B cell (primary cell): ENCODE measurements at regions of chr10 and their contacts with region 1.

Region 1: GRCh38 chr10:63376560-63377304 is 89.0 kb downstream of the JMJD1C start:
- DNase-seq: peak; percentile 64
- ATAC-seq: peak; percentile 94
- H3K4me3 ChIP-seq: peak overlapping the region in 3 of 5 experiments; percentile 7 to 45 (median 40)
- H3K4me3 Mint-ChIP-seq: peak overlapping the region; percentile 59
- H3K27ac ChIP-seq: no peak overlapping the region
- H3K27ac Mint-ChIP-seq: peak overlapping the region; percentile 3
- H3K4me1 ChIP-seq: peaks cover 8 to 11% of the 10 kb centered on the region in 2 donors
- H3K4me1 Mint-ChIP-seq: peaks cover 17% of the 10 kb centered on the region
- H3K27me3 ChIP-seq: no peaks in the 10 kb centered on the region
- H3K27me3 Mint-ChIP-seq: no peaks in the 10 kb centered on the region
- CTCF ChIP-seq: no peak

Region 2: GRCh38 chr10:63173468-63174232 is 203.1 kb before region 1 on chr10:
- CTCF ChIA-PET with region 1: no interaction called
- POLR2A ChIA-PET with region 1: no interaction called
- intact Hi-C with region 1: no loop called
- DNase-seq: peak; percentile 70
- ATAC-seq: peak; percentile 91
- H3K4me3 ChIP-seq: no peak overlapping the region
- H3K4me3 Mint-ChIP-seq: peak overlapping the region; percentile 4
- H3K27ac ChIP-seq: peak overlapping the region; percentile 21 to 51
- H3K27ac Mint-ChIP-seq: peak overlapping the region; percentile 59
- H3K4me1 ChIP-seq: peaks cover 18 to 22% of the 10 kb centered on the region in 2 donors
- H3K4me1 Mint-ChIP-seq: peaks cover 31% of the 10 kb centered on the region
- H3K27me3 ChIP-seq: no peaks in the 10 kb centered on the region
- H3K27me3 Mint-ChIP-seq: no peaks in the 10 kb centered on the region
- CTCF ChIP-seq: no peak

Region 3: GRCh38 chr10:63409465-63410027 is 32.8 kb after region 1 on chr10:
- CTCF ChIA-PET with region 1: no interaction called
- POLR2A ChIA-PET with region 1: no interaction called
- intact Hi-C with region 1: loop called (anchors 5 kb)
- DNase-seq: no peak
- ATAC-seq: no peak
- H3K4me3 ChIP-seq: no peak overlapping the region
- H3K4me3 Mint-ChIP-seq: no peak overlapping the region
- H3K27ac ChIP-seq: no peak overlapping the region
- H3K27ac Mint-ChIP-seq: no peak overlapping the region
- H3K4me1 ChIP-seq: peaks cover 6 to 10% of the 10 kb centered on the region in 2 donors
- H3K4me1 Mint-ChIP-seq: peaks cover 18% of the 10 kb centered on the region
- H3K27me3 ChIP-seq: no peaks in the 10 kb centered on the region
- H3K27me3 Mint-ChIP-seq: no peaks in the 10 kb centered on the region
- CTCF ChIP-seq: no peak